GM12878 (cell line): ENCODE measurements at regions of chr6 and their contacts with region 1.

Region 1: GRCh38 chr6:132798869-132799538 is 567 bp upstream of the SLC18B1 start:
- DNase-seq: peak; percentile 63
- ATAC-seq: peak; percentile 94
- H3K4me3 ChIP-seq: peak overlapping the region; percentile 82
- H3K27ac ChIP-seq: peak overlapping the region; percentile 87
- H3K4me1 ChIP-seq: peaks cover 3% of the 10 kb centered on the region; the same call in 1 of the 2 replicates
- H3K27me3 ChIP-seq: no peaks in the 10 kb centered on the region
- CTCF ChIP-seq: peak; percentile 78 to 90 (median 85)
- EP300 ChIP-seq: no peak
- POLR2A ChIP-seq: no peak
- RAD21 ChIP-seq: peak; percentile 55

Region 2: GRCh38 chr6:132082421-132082820 is 716.6 kb before region 1 on chr6:
- CTCF ChIA-PET with region 1: no interaction called
- POLR2A ChIA-PET with region 1: no interaction called
- RAD21 ChIA-PET with region 1: no interaction called
- SMC1A ChIA-PET with region 1: no interaction called
- in situ Hi-C with region 1: no loop called
- intact Hi-C with region 1: no loop called
- DNase-seq: no peak
- ATAC-seq: no peak
- H3K4me3 ChIP-seq: no peak overlapping the region
- H3K27ac ChIP-seq: no peak overlapping the region
- H3K4me1 ChIP-seq: peaks cover 8% of the 10 kb centered on the region
- H3K27me3 ChIP-seq: no peaks in the 10 kb centered on the region
- CTCF ChIP-seq: no peak
- EP300 ChIP-seq: no peak
- POLR2A ChIP-seq: no peak
- RAD21 ChIP-seq: no peak

Region 3: GRCh38 chr6:132471788-132472187 is 327.2 kb before region 1 on chr6:
- CTCF ChIA-PET with region 1: no interaction called
- POLR2A ChIA-PET with region 1: no interaction called
- RAD21 ChIA-PET with region 1: no interaction called
- SMC1A ChIA-PET with region 1: no interaction called
- in situ Hi-C with region 1: no loop called
- intact Hi-C with region 1: no loop called
- DNase-seq: no peak
- ATAC-seq: no peak
- H3K4me3 ChIP-seq: no peak overlapping the region
- H3K27ac ChIP-seq: no peak overlapping the region
- H3K4me1 ChIP-seq: peaks cover 4% of the 10 kb centered on the region; the same call in 1 of the 2 replicates
- H3K27me3 ChIP-seq: no peaks in the 10 kb centered on the region
- CTCF ChIP-seq: no peak
- EP300 ChIP-seq: no peak
- POLR2A ChIP-seq: no peak
- RAD21 ChIP-seq: no peak

Region 4: GRCh38 chr6:132780770-132781371 is 18.1 kb before region 1 on chr6:
- CTCF ChIA-PET with region 1: interaction called, 10 read pairs
- POLR2A ChIA-PET with region 1: no interaction called
- RAD21 ChIA-PET with region 1: interaction called, 3 read pairs
- SMC1A ChIA-PET with region 1: no interaction called
- in situ Hi-C with region 1: no loop called
- intact Hi-C with region 1: no loop called
- DNase-seq: no peak
- ATAC-seq: peak; percentile 84
- H3K4me3 ChIP-seq: no peak overlapping the region
- H3K27ac ChIP-seq: no peak overlapping the region
- H3K4me1 ChIP-seq: no peaks in the 10 kb centered on the region
- H3K27me3 ChIP-seq: no peaks in the 10 kb centered on the region
- CTCF ChIP-seq: peak; percentile 42 to 50 (median 43); a peak in 4 of 6 replicates
- EP300 ChIP-seq: no peak
- POLR2A ChIP-seq: no peak
- RAD21 ChIP-seq: peak; percentile 37; the same call in 1 of the 2 replicates

Region 5: GRCh38 chr6:132788658-132789395 is 10.2 kb before region 1 on chr6:
- CTCF ChIA-PET with region 1: interaction called, 14 read pairs
- POLR2A ChIA-PET with region 1: no interaction called
- RAD21 ChIA-PET with region 1: interaction called, 4 read pairs
- SMC1A ChIA-PET with region 1: interaction called, 6 read pairs
- in situ Hi-C with region 1: no loop called
- intact Hi-C with region 1: no loop called
- DNase-seq: no peak
- ATAC-seq: peak; percentile 28; the same call in 2 of the 3 replicates
- H3K4me3 ChIP-seq: no peak overlapping the region
- H3K27ac ChIP-seq: no peak overlapping the region
- H3K4me1 ChIP-seq: no peaks in the 10 kb centered on the region
- H3K27me3 ChIP-seq: no peaks in the 10 kb centered on the region
- CTCF ChIP-seq: no peak
- EP300 ChIP-seq: no peak
- POLR2A ChIP-seq: no peak
- RAD21 ChIP-seq: no peak

Region 6: DNA sequence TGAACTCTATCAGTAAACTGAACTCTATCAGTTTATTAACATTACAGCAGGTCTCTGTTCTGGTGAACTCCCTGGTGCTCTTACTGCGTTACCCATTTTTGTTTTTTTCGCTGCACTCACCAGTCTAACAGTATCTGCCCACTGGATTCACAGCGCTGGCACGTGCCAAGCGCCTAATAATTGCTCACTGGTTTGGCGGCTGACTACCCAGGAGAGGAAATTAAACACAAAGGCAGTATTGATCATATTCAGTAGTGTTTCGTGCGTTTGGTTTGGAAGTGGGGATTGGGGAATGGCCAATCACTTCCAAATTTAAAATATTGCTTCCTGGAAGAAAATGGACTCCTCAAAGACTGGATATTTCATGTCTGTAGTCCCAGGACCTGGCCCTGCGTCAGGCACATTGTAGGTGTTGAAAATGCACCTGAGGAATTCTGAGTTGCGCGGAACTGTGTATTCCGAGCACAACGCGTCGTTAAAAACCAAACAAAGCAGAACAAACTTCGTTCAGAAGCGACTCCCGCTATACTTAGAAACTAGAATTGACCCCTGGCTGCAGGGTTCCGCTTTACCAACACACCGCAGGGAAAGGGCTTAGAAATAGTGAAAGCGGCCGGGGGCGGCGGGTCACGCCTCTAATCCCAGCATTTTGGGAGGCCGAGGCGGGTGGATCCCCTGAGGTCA is 14.3 kb after region 1 on chr6:
- CTCF ChIA-PET with region 1: interaction called, 24 read pairs
- POLR2A ChIA-PET with region 1: interaction called, 8 read pairs
- RAD21 ChIA-PET with region 1: interaction called, 6 read pairs
- SMC1A ChIA-PET with region 1: interaction called, 4 read pairs
- in situ Hi-C with region 1: no loop called
- intact Hi-C with region 1: loop called (anchors 1 kb)
- DNase-seq: no peak
- ATAC-seq: peak; percentile 52
- H3K4me3 ChIP-seq: peak overlapping the region; percentile 85
- H3K27ac ChIP-seq: peak overlapping the region; percentile 96
- H3K4me1 ChIP-seq: peaks cover 6% of the 10 kb centered on the region; the same call in 1 of the 2 replicates
- H3K27me3 ChIP-seq: peaks cover 0 to 5% of the 10 kb centered on the region in 2 experiments; a peak in 1 of 4 replicates
- CTCF ChIP-seq: no peak
- EP300 ChIP-seq: no peak
- POLR2A ChIP-seq: peak; percentile 23; the same call in 1 of the 2 replicates
- RAD21 ChIP-seq: no peak